ENCODE measurements at regions of chr9 and their contacts with region 1.

Region 1: DNA sequence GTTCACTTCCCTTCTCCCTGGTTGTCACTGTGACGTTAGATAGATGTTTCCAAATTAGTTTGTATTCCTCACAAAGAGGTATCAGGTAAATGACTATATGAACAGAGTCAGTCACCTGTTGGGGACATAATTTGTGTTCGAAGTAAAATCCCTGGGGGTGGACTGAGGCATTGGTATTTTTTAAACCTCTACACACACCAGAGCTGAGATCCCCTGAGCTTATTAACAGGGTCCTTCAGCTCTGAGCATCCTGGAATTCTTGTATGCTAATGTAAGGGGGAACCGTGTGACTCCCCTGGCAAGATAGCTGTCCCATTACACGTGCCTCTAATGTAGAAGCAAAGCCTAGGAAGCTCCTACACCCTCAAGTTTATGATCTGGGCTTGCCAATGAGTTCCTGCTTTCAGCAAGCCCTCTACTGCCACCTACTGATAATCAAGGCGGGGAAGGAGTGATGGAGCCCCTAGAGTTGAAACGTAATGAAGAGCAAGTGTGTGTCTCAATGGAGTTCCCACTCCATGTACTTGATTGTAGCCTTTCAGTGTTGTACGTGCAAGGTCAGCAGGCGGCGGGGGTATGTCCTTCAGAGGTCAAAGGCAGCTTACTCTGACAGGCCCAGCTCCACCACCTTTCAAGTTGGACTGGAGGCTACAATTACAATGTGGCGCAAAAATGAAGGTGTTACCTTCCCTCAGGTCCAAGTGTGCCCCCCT is 14.4 kb downstream of the PRKACG start:
- DNase-seq: peak; percentile 65
- ATAC-seq: peak; percentile 95
- H3K4me3 ChIP-seq: no peak overlapping the region
- H3K27ac ChIP-seq: no peak overlapping the region
- H3K4me1 ChIP-seq: no peaks in the 10 kb centered on the region
- H3K27me3 ChIP-seq: peaks cover 11% of the 10 kb centered on the region
- CTCF ChIP-seq: peak; percentile 90
- POLR2A ChIP-seq: no peak
- RAD21 ChIP-seq: peak; percentile 75

Region 2: GRCh38 chr9:68979538-68980314 is 19.8 kb before region 1 on chr9:
- CTCF ChIA-PET with region 1: interaction called, 6 read pairs
- POLR2A ChIA-PET with region 1: no interaction called
- dilution Hi-C with region 1: no loop called
- in situ Hi-C with region 1: no loop called
- intact Hi-C with region 1: loop called (anchors 2 kb)
- DNase-seq: no peak
- ATAC-seq: no peak
- H3K4me3 ChIP-seq: no peak overlapping the region
- H3K27ac ChIP-seq: no peak overlapping the region
- H3K4me1 ChIP-seq: no peaks in the 10 kb centered on the region
- H3K27me3 ChIP-seq: peaks cover 4% of the 10 kb centered on the region
- CTCF ChIP-seq: no peak
- POLR2A ChIP-seq: no peak
- RAD21 ChIP-seq: no peak

Measured in IMR-90 (cell line).